ENCODE measurements at regions of chr6 and their contacts with region 1.

Region 1: DNA sequence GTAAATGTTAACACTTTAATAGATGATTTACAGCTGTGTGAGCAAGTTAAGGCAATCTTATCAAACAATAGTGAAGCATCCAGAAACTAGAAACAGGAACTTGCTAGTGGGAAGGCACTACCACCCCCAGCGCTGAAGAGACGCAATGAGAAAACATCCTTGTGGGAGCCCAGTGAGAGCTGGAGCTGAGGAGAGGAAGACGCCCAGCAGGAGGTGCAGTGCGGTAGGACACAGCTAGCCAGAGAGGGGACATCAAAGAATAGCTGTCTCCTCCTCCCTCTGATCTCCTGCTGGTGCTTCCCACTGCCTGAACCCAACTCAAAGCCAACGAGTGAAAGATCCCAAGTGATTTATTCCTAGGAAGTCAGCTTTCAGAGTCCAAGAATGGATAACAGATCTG is 140.3 kb downstream of the COL12A1 start:
- DNase-seq: no peak
- ATAC-seq: no peak
- H3K4me3 ChIP-seq: no peak overlapping the region
- H3K27ac ChIP-seq: no peak overlapping the region
- H3K4me1 ChIP-seq: no peaks in the 10 kb centered on the region
- H3K27me3 ChIP-seq: no peaks in the 10 kb centered on the region
- CTCF ChIP-seq: no peak

Region 2: GRCh38 chr6:74366634-74367033 is 698.9 kb before region 1 on chr6:
- CTCF ChIA-PET with region 1: no interaction called
- POLR2A ChIA-PET with region 1: no interaction called
- intact Hi-C with region 1: no loop called
- DNase-seq: peak; percentile 55
- ATAC-seq: peak; percentile 76
- H3K4me3 ChIP-seq: no peak overlapping the region
- H3K27ac ChIP-seq: peak overlapping the region; percentile 60
- H3K4me1 ChIP-seq: peaks cover 20% of the 10 kb centered on the region
- H3K27me3 ChIP-seq: no peaks in the 10 kb centered on the region
- CTCF ChIP-seq: no peak

Region 3: DNA sequence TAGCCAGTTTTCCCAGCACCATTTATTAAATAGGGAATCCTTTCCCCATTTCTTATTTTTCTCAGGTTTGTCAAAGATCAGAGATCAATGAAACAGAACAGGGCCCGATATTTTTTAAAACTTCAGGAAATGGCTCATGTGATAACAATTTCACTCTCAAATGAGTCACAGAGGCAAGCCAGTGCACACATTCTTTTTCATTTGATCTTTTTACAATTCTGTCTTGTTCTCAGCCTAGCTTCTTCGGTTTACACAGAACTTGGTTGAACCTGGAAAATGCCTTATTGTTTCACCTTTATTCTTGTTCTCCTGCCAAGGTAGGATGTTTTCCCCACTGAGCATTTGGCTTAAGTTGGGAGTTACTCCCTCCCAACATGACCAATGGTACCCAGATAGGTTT is 118.6 kb before region 1 on chr6:
- CTCF ChIA-PET with region 1: no interaction called
- POLR2A ChIA-PET with region 1: no interaction called
- intact Hi-C with region 1: no loop called
- DNase-seq: peak; percentile 74
- ATAC-seq: peak; percentile 78
- H3K4me3 ChIP-seq: no peak overlapping the region
- H3K27ac ChIP-seq: peak overlapping the region; percentile 28
- H3K4me1 ChIP-seq: peaks cover 15% of the 10 kb centered on the region
- H3K27me3 ChIP-seq: no peaks in the 10 kb centered on the region
- CTCF ChIP-seq: no peak

Region 4: DNA sequence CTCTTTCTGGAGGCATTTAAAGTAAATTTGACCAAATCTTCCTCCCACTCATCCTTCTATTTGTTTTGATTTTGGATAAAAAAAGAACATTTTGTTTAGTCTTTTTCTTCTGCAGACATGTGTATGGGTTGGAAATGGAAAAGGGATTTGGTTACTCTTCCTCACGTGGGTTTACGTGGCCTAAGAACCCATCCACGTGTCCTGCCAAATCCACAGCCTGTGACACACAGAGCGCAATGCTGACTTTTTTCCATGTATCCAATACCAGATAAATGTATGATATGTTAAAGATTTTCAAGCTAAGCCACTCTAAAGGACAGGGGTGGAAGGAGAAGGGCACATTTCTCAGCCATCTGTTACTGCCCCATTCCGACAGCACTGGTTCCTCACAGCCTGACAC is 36.2 kb before region 1 on chr6:
- CTCF ChIA-PET with region 1: no interaction called
- POLR2A ChIA-PET with region 1: interaction called, 12 read pairs
- intact Hi-C with region 1: no loop called
- DNase-seq: no peak
- ATAC-seq: no peak
- H3K4me3 ChIP-seq: no peak overlapping the region
- H3K27ac ChIP-seq: no peak overlapping the region
- H3K4me1 ChIP-seq: no peaks in the 10 kb centered on the region
- H3K27me3 ChIP-seq: no peaks in the 10 kb centered on the region
- CTCF ChIP-seq: no peak

Measured in PC-3 (cell line).